ENCODE measurements at regions of chr13 and their contacts with region 1.

Region 1: DNA sequence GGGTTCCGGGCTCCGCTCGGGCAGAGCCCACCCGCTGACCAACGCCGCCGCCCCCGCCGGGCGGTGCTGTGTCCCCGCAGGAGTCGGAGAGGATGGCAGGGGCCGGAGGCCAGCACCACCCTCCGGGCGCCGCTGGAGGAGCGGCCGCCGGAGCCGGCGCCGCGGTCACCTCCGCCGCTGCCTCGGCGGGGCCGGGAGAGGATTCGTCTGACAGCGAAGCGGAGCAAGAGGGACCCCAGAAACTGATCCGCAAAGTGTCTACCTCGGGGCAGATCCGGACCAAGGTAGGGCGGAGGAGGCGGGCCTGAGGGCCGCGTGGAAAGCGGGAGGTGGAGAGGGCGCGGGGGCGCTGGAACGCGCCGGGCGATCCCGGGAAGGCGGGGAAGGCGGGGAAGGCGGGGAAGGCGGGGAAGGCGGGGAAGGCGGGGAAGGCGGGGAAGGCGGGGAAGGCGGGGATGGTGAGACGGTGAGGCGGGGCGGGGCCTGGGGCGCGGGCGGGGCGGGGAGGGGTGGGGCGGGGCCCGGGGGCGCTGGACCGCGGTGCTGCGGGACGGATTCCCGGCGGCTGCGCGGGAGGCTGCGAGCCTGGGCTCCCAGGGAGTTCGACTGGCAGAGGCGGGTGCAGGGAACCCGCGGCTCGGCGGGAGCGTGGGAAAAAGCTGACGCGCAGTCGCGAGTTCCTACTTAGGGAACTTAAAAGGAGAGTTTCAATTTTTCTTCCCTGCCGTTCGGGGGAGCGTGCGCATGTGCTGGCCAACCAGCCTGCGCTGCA is 420 bp downstream of the DGKH start:
- DNase-seq: peak; percentile 87 to 88
- ATAC-seq: peak; percentile 83 to 91 (median 87)
- H3K4me3 ChIP-seq: peak overlapping the region; percentile 76 to 93 (median 86)
- H3K27ac ChIP-seq: peak overlapping the region; percentile 80 to 96 (median 92)
- H3K4me1 ChIP-seq: peaks cover 0 to 23% (median 15%) of the 10 kb centered on the region in 9 donors
- H3K27me3 ChIP-seq: peaks cover 0 to 12% (median 0%) of the 10 kb centered on the region in 7 donors
- CTCF ChIP-seq: peak in 7 of 9 donors; percentile 9 to 47 (median 29)

Region 2: GRCh38 chr13:41916173-41916954 is 132.5 kb before region 1 on chr13:
- intact Hi-C with region 1: loop called in 4 of 10 experiments (anchors 5 to 10 kb)
- DNase-seq: no peak
- ATAC-seq: peak in 6 of 8 donors; percentile 18 to 63 (median 54)
- H3K4me3 ChIP-seq: peak overlapping the region in 1 of 10 donors; percentile 2
- H3K27ac ChIP-seq: peak overlapping the region in 8 of 10 donors; percentile 7 to 70 (median 52)
- H3K4me1 ChIP-seq: peaks cover 5 to 68% (median 47%) of the 10 kb centered on the region in 9 donors
- H3K27me3 ChIP-seq: no peaks in the 10 kb centered on the region
- CTCF ChIP-seq: no peak

Region 3: GRCh38 chr13:42083138-42083770 is 34.4 kb after region 1 on chr13:
- intact Hi-C with region 1: loop called in 1 of 10 experiments (anchors 5 kb)
- DNase-seq: no peak
- ATAC-seq: no peak
- H3K4me3 ChIP-seq: no peak overlapping the region
- H3K27ac ChIP-seq: no peak overlapping the region
- H3K4me1 ChIP-seq: peaks cover 0 to 3% (median 0%) of the 10 kb centered on the region in 9 donors
- H3K27me3 ChIP-seq: no peaks in the 10 kb centered on the region
- CTCF ChIP-seq: no peak

Region 4: GRCh38 chr13:42094516-42095040 is 45.7 kb after region 1 on chr13:
- intact Hi-C with region 1: no loop called
- DNase-seq: no peak
- ATAC-seq: no peak
- H3K4me3 ChIP-seq: no peak overlapping the region
- H3K27ac ChIP-seq: no peak overlapping the region
- H3K4me1 ChIP-seq: peaks cover 0 to 11% (median 5%) of the 10 kb centered on the region in 9 donors
- H3K27me3 ChIP-seq: no peaks in the 10 kb centered on the region
- CTCF ChIP-seq: no peak